Naive thymus-derived CD4-positive, alpha-beta T cell (primary cell): ENCODE measurements at regions of chr3 and their contacts with region 1.

Region 1: DNA sequence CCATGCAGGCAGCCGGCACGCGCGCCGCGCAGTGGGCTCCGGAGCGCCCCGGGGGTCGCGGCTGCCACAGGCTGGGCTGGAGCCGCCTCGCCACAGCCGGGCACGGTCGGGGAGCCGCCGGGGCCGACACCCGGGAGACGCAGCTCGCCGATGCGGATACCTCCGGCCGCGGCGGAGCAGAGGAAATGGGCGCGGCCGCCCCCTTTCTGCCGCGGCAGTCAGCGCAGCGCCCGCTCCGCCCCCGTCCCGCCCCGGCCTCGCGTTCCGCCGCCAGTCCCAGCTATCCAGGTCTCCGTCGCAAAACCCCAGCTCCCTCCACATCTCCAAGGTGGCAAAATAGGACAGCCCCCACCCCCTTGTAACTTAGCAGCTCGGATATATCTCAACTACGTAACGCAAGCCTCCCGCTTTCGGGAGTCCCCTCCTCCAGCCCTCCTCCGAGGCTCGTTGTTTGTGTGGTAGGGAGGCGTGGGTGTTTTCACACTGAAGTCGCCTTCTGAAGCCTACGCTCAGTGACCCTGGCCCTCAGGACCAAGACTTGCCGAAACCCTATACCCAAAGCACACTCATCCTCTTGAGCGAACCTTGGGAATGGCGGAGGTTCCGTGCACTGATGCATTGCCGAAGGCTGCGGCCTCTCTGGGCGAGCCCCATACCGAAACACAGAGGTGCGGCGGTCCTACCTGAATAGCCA is at the start of gene SH3BP5:
- DNase-seq: peak; percentile 52 to 82 (median 71)
- ATAC-seq: peak; percentile 94
- H3K4me3 ChIP-seq: peak within 1 kb of the TSS; percentile 96
- H3K4me3 Mint-ChIP-seq: peak within 1 kb of the TSS; percentile 93 to 99 (median 95)
- H3K27ac ChIP-seq: peak within 1 kb of the TSS; percentile 86
- H3K27ac Mint-ChIP-seq: peak within 1 kb of the TSS; percentile 87 to 95 (median 91)
- H3K4me1 ChIP-seq: peaks cover 37 to 45% of the 10 kb centered on the region in 2 donors
- H3K4me1 Mint-ChIP-seq: peaks cover 35 to 57% (median 54%) of the 10 kb centered on the region in 7 donors
- H3K27me3 ChIP-seq: no peaks in the 10 kb centered on the region
- H3K27me3 Mint-ChIP-seq: no peaks in the 10 kb centered on the region
- total RNA-seq, gene SH3BP5: 18.5 to 64.7 (median 39.5) TPM

Region 2: DNA sequence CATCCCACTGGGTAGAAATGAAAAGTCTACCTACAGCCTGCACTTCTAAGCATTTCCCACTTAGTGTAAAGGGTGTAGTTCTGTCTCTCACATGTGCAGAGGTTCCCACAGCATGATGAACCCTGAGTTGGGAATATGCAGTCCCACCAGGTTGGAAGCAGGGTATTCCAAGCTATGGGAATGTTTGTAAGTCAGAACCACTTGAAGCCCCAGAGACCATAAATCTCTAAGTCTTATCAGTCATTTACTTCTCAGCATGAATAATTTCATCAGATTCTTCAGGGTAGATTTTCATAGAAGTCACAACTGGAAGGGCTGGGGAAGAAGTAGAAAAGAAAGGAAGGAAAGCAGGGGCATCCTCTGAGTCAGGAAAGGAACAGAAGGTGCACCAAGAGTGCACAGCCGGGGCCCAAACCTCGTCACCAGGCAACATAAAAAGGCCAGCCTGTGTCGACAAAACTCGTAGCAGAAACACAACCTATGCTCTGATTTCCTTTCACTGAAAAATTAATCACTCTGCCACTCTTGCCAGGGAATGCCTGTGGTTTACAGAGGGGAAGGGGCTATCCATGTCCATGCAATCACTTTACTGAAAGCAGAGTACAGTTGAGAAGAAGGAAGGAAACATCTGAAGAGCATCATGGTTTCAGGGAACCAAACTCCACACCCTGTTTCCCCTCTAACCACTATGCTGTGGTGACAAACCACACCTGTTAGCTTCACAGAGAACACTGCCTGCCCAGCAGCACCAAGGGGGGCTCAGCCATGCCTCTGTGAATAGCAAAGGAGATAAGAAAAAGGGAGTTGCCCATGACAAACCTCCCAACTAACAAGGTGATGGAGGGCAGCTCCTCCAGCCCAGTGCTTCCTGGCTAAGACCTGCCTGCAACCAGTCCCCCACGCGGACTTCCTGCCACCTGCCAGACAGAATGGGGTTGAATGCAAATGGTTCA is 40.7 kb before region 1 on chr3:
- CTCF ChIA-PET with region 1: interaction called, 4 read pairs
- POLR2A ChIA-PET with region 1: interaction called, 3 read pairs
- intact Hi-C with region 1: loop called (anchors 1 kb)
- DNase-seq: peak in 8 of 9 donors; percentile 61 to 78 (median 68)
- ATAC-seq: peak; percentile 84
- H3K4me3 ChIP-seq: peak overlapping the region; percentile 28
- H3K4me3 Mint-ChIP-seq: peak overlapping the region; percentile 74 to 86 (median 80)
- H3K27ac ChIP-seq: peak overlapping the region; percentile 23
- H3K27ac Mint-ChIP-seq: peak overlapping the region; percentile 77 to 97 (median 94)
- H3K4me1 ChIP-seq: peaks cover 58 to 62% of the 10 kb centered on the region in 2 donors
- H3K4me1 Mint-ChIP-seq: peaks cover 64 to 96% (median 85%) of the 10 kb centered on the region in 7 donors
- H3K27me3 ChIP-seq: no peaks in the 10 kb centered on the region
- H3K27me3 Mint-ChIP-seq: no peaks in the 10 kb centered on the region

Region 3: DNA sequence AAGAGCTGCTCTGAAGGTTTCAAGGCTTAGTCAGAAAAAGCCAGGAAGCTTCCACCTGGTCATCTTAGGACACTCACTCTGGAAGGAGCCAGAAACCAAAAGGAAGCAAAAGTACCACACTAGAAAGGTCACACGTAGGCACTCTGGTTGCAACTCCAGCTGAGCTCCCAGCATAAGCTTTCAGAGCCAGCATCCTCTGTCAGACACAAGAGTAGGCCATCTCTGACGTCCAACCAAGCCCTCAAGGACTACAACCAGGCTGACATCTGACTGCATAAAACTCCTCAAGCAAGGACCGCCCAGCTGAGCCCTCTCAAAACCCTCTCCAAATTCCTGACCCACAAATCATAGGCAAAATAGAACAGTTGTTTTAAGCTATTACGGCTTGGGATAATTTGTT is 13.0 kb before region 1 on chr3:
- CTCF ChIA-PET with region 1: interaction called, 31 read pairs
- POLR2A ChIA-PET with region 1: interaction called, 10 read pairs
- intact Hi-C with region 1: loop called in 1 of 2 experiments (anchors 1 kb)
- DNase-seq: no peak
- ATAC-seq: no peak
- H3K4me3 ChIP-seq: no peak overlapping the region
- H3K4me3 Mint-ChIP-seq: peak overlapping the region in 6 of 10 donors; percentile 44 to 71 (median 66)
- H3K27ac ChIP-seq: no peak overlapping the region
- H3K27ac Mint-ChIP-seq: peak overlapping the region in 8 of 9 donors; percentile 33 to 90 (median 62)
- H3K4me1 ChIP-seq: peaks cover 46 to 64% of the 10 kb centered on the region in 2 donors
- H3K4me1 Mint-ChIP-seq: peaks cover 40 to 91% (median 77%) of the 10 kb centered on the region in 7 donors
- H3K27me3 ChIP-seq: no peaks in the 10 kb centered on the region
- H3K27me3 Mint-ChIP-seq: no peaks in the 10 kb centered on the region

Region 4: GRCh38 chr3:15356186-15356585 is 23.6 kb after region 1 on chr3:
- CTCF ChIA-PET with region 1: interaction called, 5 read pairs
- POLR2A ChIA-PET with region 1: interaction called, 7 read pairs
- intact Hi-C with region 1: loop called (anchors 1 to 2 kb)
- DNase-seq: no peak
- ATAC-seq: no peak
- H3K4me3 ChIP-seq: peak overlapping the region; percentile 40
- H3K4me3 Mint-ChIP-seq: peak overlapping the region; percentile 67 to 88 (median 76)
- H3K27ac ChIP-seq: peak overlapping the region; percentile 67
- H3K27ac Mint-ChIP-seq: peak overlapping the region; percentile 87 to 99 (median 93)
- H3K4me1 ChIP-seq: peaks cover 19 to 36% of the 10 kb centered on the region in 2 donors
- H3K4me1 Mint-ChIP-seq: peaks cover 28 to 53% (median 45%) of the 10 kb centered on the region in 7 donors
- H3K27me3 ChIP-seq: no peaks in the 10 kb centered on the region
- H3K27me3 Mint-ChIP-seq: no peaks in the 10 kb centered on the region